T-cell (primary cell): ENCODE measurements at regions of chr14 and their contacts with region 1.

Region 1: GRCh38 chr14:67385110-67385509 is 25.0 kb downstream of the EIF2S1 start:
- DNase-seq: no peak
- ATAC-seq: no peak
- H3K4me3 ChIP-seq: no peak overlapping the region
- H3K4me3 Mint-ChIP-seq: no peak overlapping the region
- H3K27ac ChIP-seq: no peak overlapping the region
- H3K27ac Mint-ChIP-seq: no peak overlapping the region
- H3K4me1 ChIP-seq: no peaks in the 10 kb centered on the region
- H3K4me1 Mint-ChIP-seq: peaks cover 0 to under 1% (median under 1%) of the 10 kb centered on the region in 3 donors
- H3K27me3 ChIP-seq: no peaks in the 10 kb centered on the region
- H3K27me3 Mint-ChIP-seq: no peaks in the 10 kb centered on the region

Region 2: GRCh38 chr14:67269298-67270061 is 115.6 kb before region 1 on chr14:
- CTCF ChIA-PET with region 1: no interaction called
- POLR2A ChIA-PET with region 1: no interaction called
- DNase-seq: no peak
- ATAC-seq: no peak
- H3K4me3 ChIP-seq: no peak overlapping the region
- H3K4me3 Mint-ChIP-seq: no peak overlapping the region
- H3K27ac ChIP-seq: no peak overlapping the region
- H3K27ac Mint-ChIP-seq: no peak overlapping the region
- H3K4me1 ChIP-seq: peaks cover 0 to 2% of the 10 kb centered on the region in 2 experiments
- H3K4me1 Mint-ChIP-seq: peaks cover 13 to 26% (median 18%) of the 10 kb centered on the region in 3 donors
- H3K27me3 ChIP-seq: no peaks in the 10 kb centered on the region
- H3K27me3 Mint-ChIP-seq: no peaks in the 10 kb centered on the region

Region 3: DNA sequence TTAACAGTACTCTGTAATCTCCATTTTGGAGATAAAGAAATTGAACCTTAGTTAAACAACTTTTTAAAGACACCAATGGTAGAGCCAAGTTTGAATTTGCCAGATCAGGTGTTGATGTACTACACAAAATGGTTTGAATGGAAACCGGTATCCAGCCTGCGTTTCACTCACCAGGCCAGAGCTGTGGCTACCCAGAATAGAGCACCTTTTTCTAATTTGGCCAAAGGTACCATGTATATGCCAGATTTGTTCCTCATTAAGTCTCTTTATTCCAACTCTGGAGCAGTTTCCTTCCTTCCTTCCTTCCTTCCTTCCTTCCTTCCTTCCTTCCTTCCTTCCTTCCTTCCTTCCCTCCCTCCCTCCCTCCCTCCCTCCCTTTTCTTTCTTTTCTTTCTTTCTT is 104.6 kb before region 1 on chr14:
- CTCF ChIA-PET with region 1: no interaction called
- POLR2A ChIA-PET with region 1: no interaction called
- DNase-seq: no peak
- ATAC-seq: no peak
- H3K4me3 ChIP-seq: no peak overlapping the region
- H3K4me3 Mint-ChIP-seq: no peak overlapping the region
- H3K27ac ChIP-seq: no peak overlapping the region
- H3K27ac Mint-ChIP-seq: no peak overlapping the region
- H3K4me1 ChIP-seq: no peaks in the 10 kb centered on the region
- H3K4me1 Mint-ChIP-seq: peaks cover 10 to 26% (median 24%) of the 10 kb centered on the region in 3 donors
- H3K27me3 ChIP-seq: no peaks in the 10 kb centered on the region
- H3K27me3 Mint-ChIP-seq: no peaks in the 10 kb centered on the region

Region 4: GRCh38 chr14:67345583-67345982 is 39.5 kb before region 1 on chr14:
- CTCF ChIA-PET with region 1: interaction called in 1 of 2 experiments, 4 read pairs
- POLR2A ChIA-PET with region 1: interaction called in 1 of 2 experiments, 12 read pairs
- DNase-seq: no peak
- ATAC-seq: no peak
- H3K4me3 ChIP-seq: no peak overlapping the region
- H3K4me3 Mint-ChIP-seq: no peak overlapping the region
- H3K27ac ChIP-seq: no peak overlapping the region
- H3K27ac Mint-ChIP-seq: no peak overlapping the region
- H3K4me1 ChIP-seq: no peaks in the 10 kb centered on the region
- H3K4me1 Mint-ChIP-seq: no peaks in the 10 kb centered on the region
- H3K27me3 ChIP-seq: no peaks in the 10 kb centered on the region
- H3K27me3 Mint-ChIP-seq: no peaks in the 10 kb centered on the region

Region 5: DNA sequence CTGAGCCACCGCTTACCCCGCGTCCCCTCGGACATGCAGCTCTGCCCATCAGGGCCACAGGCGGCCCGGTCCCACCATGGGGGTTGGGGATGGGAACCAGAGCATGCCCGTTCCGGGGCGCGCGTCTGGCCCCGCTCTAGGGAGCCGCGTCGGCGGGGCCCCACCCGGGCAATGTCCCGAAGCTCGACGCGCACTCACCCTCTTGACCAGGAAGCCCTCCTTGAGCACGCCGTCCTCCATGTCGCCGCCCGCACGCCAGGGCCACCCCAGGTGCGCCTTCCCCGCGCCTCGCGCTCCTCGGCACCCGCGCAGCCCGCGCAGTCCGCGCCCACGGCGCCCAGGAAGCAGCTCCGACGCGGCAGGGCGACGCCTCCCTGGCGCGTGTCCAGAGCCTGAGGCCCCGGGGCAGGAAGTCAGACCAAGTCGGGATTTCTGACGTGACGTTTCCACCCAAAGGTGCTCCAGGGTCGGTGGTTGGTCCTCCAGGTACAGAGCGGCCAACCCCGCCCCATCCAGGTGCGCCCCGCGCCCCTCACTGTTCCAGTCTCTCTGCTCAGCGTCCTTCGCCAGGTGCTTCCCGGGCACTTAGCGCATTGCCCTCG is 26.8 kb after region 1 on chr14 and contains the start of gene PLEK2:
- CTCF ChIA-PET with region 1: no interaction called
- POLR2A ChIA-PET with region 1: no interaction called
- DNase-seq: peak; percentile 24 to 71 (median 49)
- ATAC-seq: peak; percentile 79 to 92 (median 90)
- H3K4me3 ChIP-seq: peak within 1 kb of the TSS; percentile 41 to 71
- H3K4me3 Mint-ChIP-seq: peak within 1 kb of the TSS; percentile 68 to 77 (median 73)
- H3K27ac ChIP-seq: no peak within 1 kb of the TSS
- H3K27ac Mint-ChIP-seq: peak within 1 kb of the TSS in 1 of 2 donors; percentile 61
- H3K4me1 ChIP-seq: peaks cover 0 to 12% of the 10 kb centered on the region in 2 experiments
- H3K4me1 Mint-ChIP-seq: peaks cover 10 to 15% (median 12%) of the 10 kb centered on the region in 3 donors
- H3K27me3 ChIP-seq: peaks cover 0 to 20% of the 10 kb centered on the region in 2 experiments
- H3K27me3 Mint-ChIP-seq: peaks cover 0 to 2% of the 10 kb centered on the region in 2 donors
- total RNA-seq, gene PLEK2: 0.79 to 4.0 (median 3.5) TPM

Region 6: DNA sequence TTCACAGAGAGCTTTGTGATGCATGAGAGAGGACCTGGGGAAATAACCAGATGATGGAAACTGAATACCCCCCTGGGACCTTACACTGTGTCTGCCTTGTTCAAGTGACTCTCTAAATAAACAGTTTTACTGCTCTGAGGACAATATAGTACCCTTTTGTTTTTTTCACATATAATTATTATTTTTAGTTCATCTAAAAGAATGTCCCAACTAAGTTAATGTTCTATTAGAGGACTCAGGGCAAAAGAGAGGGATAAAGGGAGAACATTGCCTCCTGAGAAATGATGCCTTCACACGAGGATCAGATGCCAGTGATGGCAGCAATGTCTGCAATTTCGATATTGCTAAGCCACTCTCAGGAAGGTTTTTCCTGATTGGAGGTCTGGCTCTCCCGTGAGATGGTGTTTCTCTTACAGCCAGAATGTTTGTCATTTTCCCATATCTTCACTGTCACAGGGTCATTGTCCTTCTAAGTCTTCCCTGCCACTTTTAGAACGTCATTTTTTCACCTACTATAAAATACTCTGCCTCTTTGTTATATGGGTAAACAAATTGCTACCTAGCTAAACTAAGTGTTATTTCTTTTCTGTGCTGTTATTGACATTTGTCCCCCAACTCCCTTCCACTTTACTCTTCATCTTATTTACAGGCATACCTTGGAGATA is 636.0 kb after region 1 on chr14:
- CTCF ChIA-PET with region 1: no interaction called
- POLR2A ChIA-PET with region 1: no interaction called
- DNase-seq: no peak
- ATAC-seq: no peak
- H3K4me3 ChIP-seq: no peak overlapping the region
- H3K4me3 Mint-ChIP-seq: no peak overlapping the region
- H3K27ac ChIP-seq: no peak overlapping the region
- H3K27ac Mint-ChIP-seq: no peak overlapping the region
- H3K4me1 ChIP-seq: no peaks in the 10 kb centered on the region
- H3K4me1 Mint-ChIP-seq: peaks cover 0 to 7% (median 0%) of the 10 kb centered on the region in 3 donors
- H3K27me3 ChIP-seq: no peaks in the 10 kb centered on the region
- H3K27me3 Mint-ChIP-seq: no peaks in the 10 kb centered on the region